ENCODE measurements at regions of chr14 and their contacts with region 1.

Region 1: GRCh38 chr14:20855652-20856291 is 35.4 kb upstream of the RNASE3 start:
- DNase-seq: no peak
- H3K4me3 ChIP-seq: no peak overlapping the region
- H3K27ac ChIP-seq: no peak overlapping the region
- H3K27me3 ChIP-seq: peaks cover 7% of the 10 kb centered on the region
- CTCF ChIP-seq: peak; percentile 64

Region 2: DNA sequence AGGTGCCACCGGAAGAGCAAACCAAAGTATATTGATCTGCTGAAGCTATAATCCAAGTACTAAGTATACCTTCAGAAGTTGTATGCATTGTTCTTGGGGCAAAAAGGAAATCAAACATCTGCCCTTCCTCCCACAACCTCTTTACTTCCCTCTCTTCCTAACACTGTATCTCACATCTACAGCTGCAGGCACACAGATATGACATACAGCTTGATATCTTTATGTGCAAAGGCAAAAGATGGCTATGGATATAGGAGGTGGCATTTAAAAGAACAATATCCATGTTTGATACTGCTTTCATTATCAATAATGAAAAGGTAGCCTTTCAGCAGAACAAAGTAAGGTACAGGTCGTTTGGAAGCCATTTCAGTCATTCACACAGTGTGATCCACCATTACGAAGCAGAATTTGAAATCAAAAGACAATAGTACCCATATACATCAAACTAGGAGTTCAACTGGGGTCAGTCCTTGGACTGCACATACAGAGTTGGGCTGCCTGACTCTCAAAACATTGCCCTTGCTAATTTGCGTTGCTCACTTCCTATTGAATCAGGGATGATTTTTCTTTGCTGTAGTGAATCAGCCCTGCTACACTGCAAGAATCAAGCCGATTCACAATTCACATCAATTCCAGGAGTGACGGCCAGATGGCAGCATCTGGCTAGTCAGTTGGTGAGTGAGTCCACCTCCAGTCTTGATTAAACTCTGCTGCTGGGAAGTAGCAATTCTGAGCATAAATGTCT is 158.3 kb before region 1 on chr14:
- CTCF ChIA-PET with region 1: interaction called, 29 read pairs
- POLR2A ChIA-PET with region 1: no interaction called
- DNase-seq: no peak
- H3K4me3 ChIP-seq: no peak overlapping the region
- H3K27ac ChIP-seq: no peak overlapping the region
- H3K27me3 ChIP-seq: no peaks in the 10 kb centered on the region
- CTCF ChIP-seq: peak; percentile 78

Region 3: DNA sequence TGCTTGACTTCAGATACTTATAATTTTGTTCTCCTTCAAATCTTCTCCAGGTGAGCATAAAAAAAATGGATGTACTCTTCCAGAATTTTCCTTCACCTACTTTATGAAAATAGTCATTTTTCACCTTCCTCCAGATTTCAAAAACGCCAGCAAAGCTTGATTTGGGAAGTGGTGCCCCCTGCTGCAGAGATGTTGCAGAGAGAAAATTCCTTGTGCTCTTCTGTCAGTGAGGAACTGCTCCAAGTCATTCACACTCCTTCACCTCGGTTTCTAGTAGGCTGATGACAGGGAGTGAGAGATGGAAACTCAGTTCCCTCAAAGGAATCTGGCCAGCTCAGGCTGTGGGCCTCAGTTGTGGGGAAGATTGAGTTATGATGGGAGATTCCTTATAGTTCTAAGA is 11.2 kb after region 1 on chr14:
- CTCF ChIA-PET with region 1: interaction called, 17 read pairs
- POLR2A ChIA-PET with region 1: no interaction called
- DNase-seq: no peak
- H3K4me3 ChIP-seq: no peak overlapping the region
- H3K27ac ChIP-seq: no peak overlapping the region
- H3K27me3 ChIP-seq: no peaks in the 10 kb centered on the region
- CTCF ChIP-seq: peak; percentile 29; the same call in 1 of the 2 replicates

Region 4: GRCh38 chr14:21039585-21040369 is 184.0 kb after region 1 on chr14:
- CTCF ChIA-PET with region 1: interaction called, 18 read pairs
- POLR2A ChIA-PET with region 1: no interaction called
- DNase-seq: peak; percentile 26
- H3K4me3 ChIP-seq: no peak overlapping the region
- H3K27ac ChIP-seq: no peak overlapping the region
- H3K27me3 ChIP-seq: peaks cover 28% of the 10 kb centered on the region
- CTCF ChIP-seq: peak; percentile 71

Region 5: DNA sequence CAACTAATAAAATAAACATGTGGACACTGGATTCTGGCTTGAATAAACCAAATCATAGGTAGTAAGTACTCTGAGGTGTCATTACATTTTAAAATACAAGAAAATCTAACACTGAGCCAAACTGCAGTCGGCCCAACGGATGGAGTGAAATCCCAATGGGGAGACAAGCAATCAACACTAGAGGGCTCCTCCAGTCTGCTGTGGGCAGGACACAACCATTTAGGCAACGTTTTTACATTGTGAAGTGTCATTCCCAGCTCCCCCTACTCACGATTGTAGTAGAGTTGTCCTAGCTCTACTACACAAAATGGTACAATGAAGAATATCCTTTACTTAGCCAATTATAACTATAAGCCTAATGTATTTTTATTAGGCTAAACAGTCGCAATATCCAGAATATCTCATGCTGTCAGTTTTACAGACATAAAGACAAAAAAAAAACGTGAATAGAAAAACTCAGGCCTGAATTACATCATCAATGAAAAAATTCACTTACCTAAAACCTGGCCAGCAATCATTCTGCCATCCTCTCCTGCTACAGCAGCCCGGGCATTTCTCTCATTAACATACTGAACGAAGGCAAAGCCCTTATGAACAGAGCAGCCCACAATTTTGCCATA is 377.8 kb after region 1 on chr14:
- CTCF ChIA-PET with region 1: no interaction called
- POLR2A ChIA-PET with region 1: no interaction called
- DNase-seq: no peak
- H3K4me3 ChIP-seq: no peak overlapping the region
- H3K27ac ChIP-seq: no peak overlapping the region
- H3K27me3 ChIP-seq: no peaks in the 10 kb centered on the region
- CTCF ChIP-seq: peak; percentile 24; the same call in 1 of the 2 replicates

Measured in AG04450 (cell line).